Activated naive CD8-positive, alpha-beta T cell treated with anti-CD3 and anti-CD28 coated beads, Interleukin-2, amount 10 ng/mL, durations not matched to agents 7 days and 5 days (primary cell): ENCODE measurements at regions of chr17 and their contacts with region 1.

Region 1: GRCh38 chr17:7561028-7561575 is 617 bp upstream of the SENP3 start:
- DNase-seq: peak; percentile 85
- ATAC-seq: peak; percentile 54
- H3K4me3 Mint-ChIP-seq: peak overlapping the region; percentile 83
- H3K27ac Mint-ChIP-seq: peak overlapping the region; percentile 87
- H3K4me1 Mint-ChIP-seq: peaks cover 55% of the 10 kb centered on the region
- H3K27me3 Mint-ChIP-seq: no peaks in the 10 kb centered on the region

Region 2: DNA sequence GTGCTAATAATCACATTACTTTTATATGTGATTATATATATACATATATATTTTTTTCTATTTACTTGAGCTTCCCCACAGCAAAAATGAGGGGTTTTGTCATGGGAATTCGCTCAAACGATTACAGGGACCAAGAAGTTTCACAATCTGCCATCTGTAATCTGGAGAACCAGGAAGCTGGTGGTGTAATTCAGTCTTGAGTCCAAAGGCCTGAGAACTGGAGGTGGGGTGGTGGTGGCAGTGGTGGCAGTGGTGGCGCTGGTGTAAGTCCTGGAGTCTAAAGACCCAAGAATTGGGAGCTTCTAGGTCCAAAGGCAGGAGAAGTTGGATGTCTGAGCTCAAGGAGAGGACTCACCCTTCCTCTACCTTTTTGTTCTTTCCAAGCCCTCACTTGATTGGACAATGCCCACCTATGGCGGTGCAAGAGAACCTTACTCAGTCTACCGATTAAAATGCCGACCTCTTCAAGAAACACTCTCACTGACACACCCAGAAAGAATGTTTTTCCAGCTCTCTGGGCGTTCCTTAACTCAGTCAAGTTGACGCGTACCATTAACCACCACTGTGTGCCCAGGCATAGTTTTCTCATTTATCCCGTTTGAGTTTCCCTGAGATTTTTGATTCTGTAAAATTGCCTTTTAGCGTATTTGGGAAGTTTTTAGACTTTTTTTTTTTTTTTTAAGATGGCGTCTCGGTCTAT is 45.0 kb before region 1 on chr17:
- POLR2A ChIA-PET with region 1: interaction called, 63 read pairs
- DNase-seq: no peak
- ATAC-seq: no peak
- H3K4me3 Mint-ChIP-seq: no peak overlapping the region
- H3K27ac Mint-ChIP-seq: no peak overlapping the region
- H3K4me1 Mint-ChIP-seq: peaks cover 8% of the 10 kb centered on the region
- H3K27me3 Mint-ChIP-seq: no peaks in the 10 kb centered on the region

Region 3: DNA sequence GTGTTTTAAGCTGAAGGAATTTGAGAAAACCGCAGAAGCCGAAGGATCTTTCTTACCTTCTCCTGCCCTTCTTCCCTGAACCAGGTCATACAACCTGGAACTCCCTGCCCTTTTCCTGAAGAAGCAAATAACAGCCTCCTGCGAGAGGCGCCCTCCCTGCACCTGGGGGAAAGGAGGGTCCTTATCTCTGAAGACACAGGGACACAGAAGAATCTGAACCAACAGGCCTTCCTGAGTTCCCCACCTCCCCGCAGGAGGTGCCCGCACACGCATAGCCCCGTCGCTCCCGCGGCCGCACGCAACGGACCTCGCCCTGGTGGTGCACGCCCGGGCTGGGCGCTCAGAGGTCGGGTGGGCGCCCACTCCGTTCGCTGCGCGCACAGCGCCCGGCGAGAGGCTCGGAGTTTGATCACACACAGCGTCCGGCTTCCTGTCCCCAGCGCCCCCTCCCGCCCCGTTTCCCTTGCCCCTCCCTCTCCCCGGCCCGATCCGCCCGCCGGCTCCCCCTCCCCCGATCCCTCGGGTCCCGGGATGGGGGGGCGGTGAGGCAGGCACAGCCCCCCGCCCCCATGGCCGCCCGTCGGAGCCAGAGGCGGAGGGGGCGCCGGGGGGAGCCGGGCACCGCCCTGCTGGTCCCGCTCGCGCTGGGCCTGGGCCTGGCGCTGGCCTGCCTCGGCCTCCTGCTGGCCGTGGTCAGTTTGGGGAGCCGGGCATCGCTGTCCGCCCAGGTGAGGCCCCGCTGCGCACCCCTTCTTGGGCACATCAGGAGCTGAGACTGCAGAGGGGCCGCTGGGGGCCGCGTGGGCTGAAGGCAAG is 12.3 kb before region 1 on chr17 and contains the start of gene TNFSF12:
- POLR2A ChIA-PET with region 1: interaction called, 10 read pairs
- DNase-seq: peak; percentile 77
- ATAC-seq: peak; percentile 62
- H3K4me3 Mint-ChIP-seq: peak within 1 kb of the TSS; percentile 100
- H3K27ac Mint-ChIP-seq: peak within 1 kb of the TSS; percentile 97
- H3K4me1 Mint-ChIP-seq: peaks cover 43% of the 10 kb centered on the region
- H3K27me3 Mint-ChIP-seq: peaks cover 4% of the 10 kb centered on the region
- total RNA-seq, gene TNFSF12: 93.0 to 95.7 TPM